Activated CD4-positive, alpha-beta memory T cell treated with anti-CD3 and anti-CD28 coated beads, Interleukin-2, amount 10 ng/mL, durations not matched to agents 7 days and 5 days (primary cell): ENCODE measurements at regions of chr2 and their contacts with region 1.

Region 1: GRCh38 chr2:25804338-25804737 is 73.9 kb downstream of the ASXL2 start:
- DNase-seq: no peak
- H3K4me3 Mint-ChIP-seq: peak overlapping the region; percentile 24
- H3K27ac Mint-ChIP-seq: peak overlapping the region; percentile 79
- H3K4me1 Mint-ChIP-seq: peaks cover 46% of the 10 kb centered on the region
- H3K27me3 Mint-ChIP-seq: no peaks in the 10 kb centered on the region

Region 2: GRCh38 chr2:25817630-25818029 is 13.3 kb after region 1 on chr2:
- CTCF ChIA-PET with region 1: interaction called, 3 read pairs
- POLR2A ChIA-PET with region 1: interaction called, 13 read pairs
- DNase-seq: no peak
- H3K4me3 Mint-ChIP-seq: no peak overlapping the region
- H3K27ac Mint-ChIP-seq: peak overlapping the region; percentile 32
- H3K4me1 Mint-ChIP-seq: peaks cover 38% of the 10 kb centered on the region
- H3K27me3 Mint-ChIP-seq: peaks cover 4% of the 10 kb centered on the region